ENCODE measurements at regions of chr13 and their contacts with region 1.

Region 1: DNA sequence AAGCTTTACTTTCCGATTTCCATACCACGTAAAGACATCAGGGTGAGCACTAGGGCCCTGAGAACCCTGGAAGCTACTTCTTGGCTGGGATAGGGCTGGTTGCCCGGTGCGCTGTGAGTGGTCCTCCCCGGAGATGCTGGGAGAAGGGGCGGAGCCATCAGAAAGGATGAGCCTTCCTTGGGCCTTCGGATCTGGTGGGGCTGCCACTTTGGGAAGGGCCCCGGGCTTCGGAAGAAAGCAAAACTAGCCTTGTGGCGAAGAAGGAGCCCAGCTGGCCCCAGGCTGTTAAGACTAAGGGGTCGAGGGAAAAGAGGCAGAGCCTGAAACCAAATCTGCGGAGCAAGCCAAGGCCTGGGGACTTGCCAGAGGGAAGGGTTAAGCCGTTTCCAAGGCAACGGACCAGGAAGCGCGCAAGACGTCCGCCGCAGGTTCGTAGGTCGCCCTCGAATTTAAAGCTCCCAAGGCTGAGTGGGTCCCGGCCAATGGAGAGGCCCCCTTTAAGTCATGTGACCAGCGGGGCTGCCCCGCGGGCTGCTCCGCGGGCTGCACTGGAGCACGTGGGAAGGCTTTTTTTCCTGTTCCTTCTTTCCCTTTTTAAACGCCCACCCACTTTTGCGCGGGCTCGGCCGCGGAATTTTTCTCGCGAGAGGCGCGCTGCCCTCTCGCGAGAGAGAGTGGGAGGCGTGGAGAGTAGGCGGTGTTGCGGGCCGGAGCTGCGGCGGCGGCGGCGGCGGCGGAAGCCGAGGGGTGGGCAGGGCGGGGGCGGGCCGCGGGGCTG is 426 bp upstream of the AKAP11 start:
- DNase-seq: peak; percentile 87 to 96 (median 93)
- ATAC-seq: peak; percentile 93
- H3K4me3 ChIP-seq: peak overlapping the region; percentile 84
- H3K4me3 Mint-ChIP-seq: peak overlapping the region in 9 of 10 donors; percentile 84 to 98 (median 97)
- H3K27ac ChIP-seq: peak overlapping the region; percentile 93
- H3K27ac Mint-ChIP-seq: peak overlapping the region; percentile 75 to 98 (median 96)
- H3K4me1 ChIP-seq: peaks cover 21 to 22% of the 10 kb centered on the region in 2 donors
- H3K4me1 Mint-ChIP-seq: peaks cover 16 to 55% (median 47%) of the 10 kb centered on the region in 7 donors
- H3K27me3 ChIP-seq: no peaks in the 10 kb centered on the region
- H3K27me3 Mint-ChIP-seq: peaks cover 0 to 5% (median 0%) of the 10 kb centered on the region in 5 donors

Region 2: DNA sequence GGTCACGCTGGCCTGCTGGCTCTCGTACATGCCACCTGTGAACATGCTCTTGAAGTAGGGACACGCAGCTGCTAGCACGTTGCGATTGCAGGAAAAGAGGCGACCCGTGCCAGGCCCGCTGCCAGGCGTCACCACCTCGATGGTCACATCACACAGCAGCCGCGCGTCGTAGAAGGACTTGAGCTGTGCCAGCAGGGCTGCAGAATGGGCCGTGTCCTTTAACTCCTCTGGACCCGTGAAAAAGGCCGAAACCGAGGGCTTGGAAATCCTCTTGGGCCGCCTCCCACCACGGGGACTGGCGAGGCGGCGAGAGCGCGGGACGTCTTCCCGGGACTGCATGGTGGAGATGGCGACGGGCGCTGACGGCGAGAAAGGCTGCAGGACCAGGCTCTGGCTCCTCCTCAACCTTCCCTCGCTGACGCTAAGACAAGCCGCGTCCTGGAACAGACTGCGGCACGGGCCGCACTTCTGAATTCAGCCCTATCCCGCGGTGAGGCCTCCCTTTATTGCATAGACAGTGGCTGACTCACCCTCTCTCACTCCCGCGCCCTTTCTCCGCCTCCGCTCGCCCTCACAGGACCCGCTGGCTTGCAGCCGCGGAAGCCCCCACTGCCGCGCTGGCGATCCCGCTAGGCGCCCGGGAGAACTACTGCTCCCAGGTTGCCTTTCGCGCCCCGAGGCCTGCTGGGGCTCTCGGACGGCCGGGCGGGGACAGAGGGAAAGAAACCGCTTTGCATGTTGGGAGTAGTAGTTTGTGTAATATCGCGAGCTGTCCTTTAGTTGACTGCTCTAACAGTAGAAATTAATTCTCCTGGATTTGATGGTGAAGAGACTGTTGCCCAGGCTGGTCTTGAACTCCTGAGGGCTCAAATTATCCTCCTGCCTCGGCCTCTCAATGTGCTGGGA is 1077.4 kb before region 1 on chr13 and contains the start of gene KBTBD7:
- CTCF ChIA-PET with region 1: no interaction called
- POLR2A ChIA-PET with region 1: no interaction called
- intact Hi-C with region 1: loop called in 1 of 2 experiments (anchors 1 kb)
- DNase-seq: peak; percentile 78 to 94 (median 83)
- ATAC-seq: peak; percentile 98
- H3K4me3 ChIP-seq: peak within 1 kb of the TSS; percentile 85
- H3K4me3 Mint-ChIP-seq: peak within 1 kb of the TSS; percentile 87 to 98 (median 94)
- H3K27ac ChIP-seq: peak within 1 kb of the TSS; percentile 70
- H3K27ac Mint-ChIP-seq: peak within 1 kb of the TSS; percentile 79 to 94 (median 90)
- H3K4me1 ChIP-seq: peaks cover 0 to 13% of the 10 kb centered on the region in 2 donors
- H3K4me1 Mint-ChIP-seq: peaks cover 25 to 50% (median 41%) of the 10 kb centered on the region in 7 donors
- H3K27me3 ChIP-seq: no peaks in the 10 kb centered on the region
- H3K27me3 Mint-ChIP-seq: no peaks in the 10 kb centered on the region
- total RNA-seq, gene KBTBD7: 2.8 to 12.9 (median 11.5) TPM

Region 3: DNA sequence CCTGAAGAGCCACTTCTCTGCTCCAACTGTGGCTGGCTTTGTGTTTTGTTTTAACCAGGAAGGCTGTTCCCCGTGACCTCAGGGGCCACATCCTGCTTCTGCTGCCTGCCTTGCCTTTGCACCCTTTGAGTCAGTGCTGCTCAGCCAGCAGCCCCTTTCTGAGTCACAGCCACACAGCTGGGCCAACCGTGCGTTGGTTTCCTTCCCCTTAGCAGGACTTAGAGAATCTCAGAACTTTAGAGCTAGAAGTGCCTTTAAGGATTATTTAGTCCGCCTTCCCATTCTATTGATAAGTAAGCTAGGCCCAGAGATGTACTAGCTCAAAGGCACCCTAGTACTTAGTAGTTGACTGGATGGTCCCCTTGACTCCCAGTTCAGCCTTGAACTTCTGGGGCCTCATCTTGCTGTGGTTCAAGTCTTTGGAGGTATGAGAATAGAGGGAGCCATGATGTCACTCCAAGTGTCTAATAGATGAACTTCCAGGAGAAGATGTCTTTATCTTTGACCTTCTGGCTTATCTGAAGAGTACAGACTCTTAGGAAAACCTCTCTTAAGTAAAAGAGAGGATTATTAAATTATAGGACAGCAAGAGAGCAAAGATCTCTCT is 806.2 kb before region 1 on chr13:
- CTCF ChIA-PET with region 1: no interaction called
- POLR2A ChIA-PET with region 1: interaction called, 4 read pairs
- intact Hi-C with region 1: loop called in 1 of 2 experiments (anchors 1 kb)
- DNase-seq: peak; percentile 63 to 90 (median 89)
- ATAC-seq: peak; percentile 72
- H3K4me3 ChIP-seq: peak overlapping the region; percentile 51
- H3K4me3 Mint-ChIP-seq: peak overlapping the region; percentile 89 to 98 (median 94)
- H3K27ac ChIP-seq: peak overlapping the region; percentile 97
- H3K27ac Mint-ChIP-seq: peak overlapping the region; percentile 96 to 100 (median 99)
- H3K4me1 ChIP-seq: peaks cover 64 to 87% of the 10 kb centered on the region in 2 donors
- H3K4me1 Mint-ChIP-seq: peaks cover 64 to 98% (median 93%) of the 10 kb centered on the region in 7 donors
- H3K27me3 ChIP-seq: no peaks in the 10 kb centered on the region
- H3K27me3 Mint-ChIP-seq: no peaks in the 10 kb centered on the region

Region 4: GRCh38 chr13:42048682-42049453 is 222.7 kb before region 1 on chr13:
- CTCF ChIA-PET with region 1: no interaction called
- POLR2A ChIA-PET with region 1: no interaction called
- intact Hi-C with region 1: loop called (anchors 1 to 5 kb)
- DNase-seq: peak; percentile 20 to 81 (median 43)
- ATAC-seq: peak; percentile 81
- H3K4me3 ChIP-seq: peak overlapping the region; percentile 84
- H3K4me3 Mint-ChIP-seq: peak overlapping the region; percentile 83 to 96 (median 92)
- H3K27ac ChIP-seq: peak overlapping the region; percentile 67
- H3K27ac Mint-ChIP-seq: peak overlapping the region in 2 of 9 donors; percentile 74 to 78
- H3K4me1 ChIP-seq: peaks cover 5 to 9% of the 10 kb centered on the region in 2 donors
- H3K4me1 Mint-ChIP-seq: peaks cover 6 to 38% (median 15%) of the 10 kb centered on the region in 7 donors
- H3K27me3 ChIP-seq: no peaks in the 10 kb centered on the region
- H3K27me3 Mint-ChIP-seq: peaks cover 0 to 15% (median 0%) of the 10 kb centered on the region in 5 donors

Region 5: GRCh38 chr13:42354241-42355091 is 82.9 kb after region 1 on chr13:
- CTCF ChIA-PET with region 1: no interaction called
- POLR2A ChIA-PET with region 1: no interaction called
- intact Hi-C with region 1: loop called (anchors 1 to 2 kb)
- DNase-seq: peak in 7 of 9 donors; percentile 11 to 44 (median 24)
- ATAC-seq: peak; percentile 66
- H3K4me3 ChIP-seq: peak overlapping the region; percentile 27
- H3K4me3 Mint-ChIP-seq: peak overlapping the region; percentile 52 to 79 (median 72)
- H3K27ac ChIP-seq: peak overlapping the region; percentile 56
- H3K27ac Mint-ChIP-seq: peak overlapping the region; percentile 80 to 96 (median 91)
- H3K4me1 ChIP-seq: peaks cover 33 to 35% of the 10 kb centered on the region in 2 donors
- H3K4me1 Mint-ChIP-seq: peaks cover 19 to 53% (median 48%) of the 10 kb centered on the region in 7 donors
- H3K27me3 ChIP-seq: no peaks in the 10 kb centered on the region
- H3K27me3 Mint-ChIP-seq: no peaks in the 10 kb centered on the region

Region 6: GRCh38 chr13:42991892-42992763 is 720.6 kb after region 1 on chr13 and contains the start of gene EPSTI1:
- CTCF ChIA-PET with region 1: no interaction called
- POLR2A ChIA-PET with region 1: no interaction called
- intact Hi-C with region 1: loop called in 1 of 2 experiments (anchors 5 kb)
- DNase-seq: peak; percentile 61 to 84 (median 77)
- ATAC-seq: peak; percentile 88
- H3K4me3 ChIP-seq: peak within 1 kb of the TSS; percentile 77
- H3K4me3 Mint-ChIP-seq: peak within 1 kb of the TSS; percentile 92 to 98 (median 96)
- H3K27ac ChIP-seq: peak within 1 kb of the TSS; percentile 94
- H3K27ac Mint-ChIP-seq: peak within 1 kb of the TSS; percentile 99 to 100 (median 100)
- H3K4me1 ChIP-seq: peaks cover 13 to 15% of the 10 kb centered on the region in 2 donors
- H3K4me1 Mint-ChIP-seq: peaks cover 27 to 73% (median 51%) of the 10 kb centered on the region in 7 donors
- H3K27me3 ChIP-seq: no peaks in the 10 kb centered on the region
- H3K27me3 Mint-ChIP-seq: no peaks in the 10 kb centered on the region
- total RNA-seq, gene EPSTI1: 8.4 to 125 (median 11.0) TPM

Measured in naive thymus-derived CD4-positive, alpha-beta T cell (primary cell).